ENCODE measurements at regions of chr1 and their contacts with region 1.

Region 1: DNA sequence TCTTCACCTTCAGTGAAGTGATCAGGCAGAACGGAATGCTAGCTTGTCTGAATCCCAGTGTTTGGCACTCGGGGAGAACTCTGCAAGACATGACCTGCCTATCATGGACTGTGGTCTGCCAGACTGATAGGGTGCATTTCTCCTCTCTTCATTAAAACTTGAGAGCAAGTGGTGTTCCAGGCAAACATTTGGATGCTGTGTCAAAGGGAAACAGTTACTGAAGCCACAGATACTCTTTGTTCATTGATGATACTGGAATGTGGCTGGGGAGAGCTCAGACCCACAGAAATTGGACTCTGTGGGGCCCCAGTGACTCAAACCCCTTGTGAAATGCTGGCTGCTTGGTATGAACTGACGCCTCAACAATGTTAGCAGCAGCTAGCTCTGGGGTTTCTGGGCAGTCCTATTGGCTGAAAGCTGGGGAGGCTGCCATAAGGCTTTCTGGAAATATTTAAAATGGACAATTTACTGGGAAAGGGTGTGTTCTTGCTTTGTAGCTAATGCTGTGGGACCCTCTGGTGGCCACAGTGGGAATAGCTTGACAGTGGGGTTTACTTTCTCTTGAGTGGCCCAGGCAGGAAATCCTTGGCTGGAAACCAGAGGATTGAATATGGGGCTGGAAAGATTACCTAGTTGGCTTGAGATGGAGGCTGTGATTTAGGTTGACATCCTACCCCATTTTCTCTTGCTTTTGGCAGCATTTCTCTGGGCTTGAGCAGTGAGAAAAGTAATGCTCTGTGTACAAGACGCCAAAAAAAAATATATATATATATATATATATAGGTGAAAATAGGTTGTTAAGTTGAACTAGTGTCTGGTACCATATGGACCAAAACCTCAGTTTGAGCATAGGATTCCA is 8.0 kb upstream of the S100A10 start:
- DNase-seq: peak; percentile 97
- H3K4me3 ChIP-seq: no peak overlapping the region
- CTCF ChIP-seq: peak; percentile 98

Region 2: GRCh38 chr1:151888972-151889570 is 112.5 kb before region 1 on chr1:
- in situ Hi-C with region 1: no loop called
- DNase-seq: no peak
- H3K4me3 ChIP-seq: no peak overlapping the region
- CTCF ChIP-seq: peak; percentile 35

Region 3: GRCh38 chr1:151909150-151910149 is 92.2 kb before region 1 on chr1 and contains the start of gene THEM4:
- in situ Hi-C with region 1: loop called (anchors 25 kb)
- DNase-seq: peak; percentile 96
- H3K4me3 ChIP-seq: peak within 1 kb of the TSS; percentile 60
- CTCF ChIP-seq: peak; percentile 22